ENCODE measurements at regions of chr9 and their contacts with region 1.

Region 1: DNA sequence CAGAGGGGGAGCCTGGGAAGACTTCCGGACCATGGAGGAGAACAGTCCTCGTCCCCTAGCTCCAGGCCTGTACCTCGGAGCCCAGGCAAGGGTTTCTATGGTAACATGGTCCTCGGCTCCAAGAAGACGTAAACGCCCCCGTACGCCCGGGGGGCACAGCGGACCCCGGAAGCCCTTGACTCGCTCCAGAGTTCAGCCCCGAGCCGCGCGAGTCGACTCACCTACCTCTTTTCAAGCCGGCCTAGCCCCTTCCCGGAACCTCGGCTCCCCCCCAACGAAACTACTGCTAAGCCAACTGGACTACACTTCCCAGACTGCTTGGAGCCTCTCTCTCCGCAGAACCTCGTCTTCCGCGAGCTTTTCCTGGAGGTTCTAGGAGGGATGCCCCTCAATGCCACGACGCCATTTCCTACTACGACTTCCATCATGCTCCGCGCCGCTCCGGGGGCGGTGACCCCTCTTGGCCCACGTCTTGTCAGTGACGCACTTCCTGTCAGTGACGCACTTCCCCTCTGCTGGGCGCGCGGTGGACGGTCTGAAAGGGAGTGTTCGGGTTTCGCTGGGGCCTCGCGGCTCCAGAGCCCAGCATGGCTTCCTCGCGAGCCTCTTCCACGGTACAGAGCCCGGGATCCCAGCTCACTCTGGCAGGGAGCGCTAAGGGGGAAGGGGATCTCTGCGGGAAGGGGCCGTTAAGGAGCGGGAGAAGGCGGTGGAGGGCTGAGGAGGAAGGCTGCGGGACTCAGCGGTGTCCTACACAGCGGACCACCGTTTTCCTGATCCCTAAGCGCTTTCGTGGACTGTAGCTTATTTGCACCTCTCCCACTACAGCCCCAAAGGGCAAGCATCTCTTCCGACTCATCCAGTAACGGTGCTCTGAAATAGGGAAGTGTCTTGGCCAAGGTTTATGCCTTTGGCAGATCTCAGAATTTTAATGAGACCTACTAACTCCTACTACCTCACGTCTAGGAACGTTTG is at the starts of genes CDC26 and PRPF4:
- DNase-seq: peak; percentile 94
- H3K4me3 ChIP-seq: peak within 1 kb of the TSS; percentile 97
- CTCF ChIP-seq: no peak

Region 2: GRCh38 chr9:113131689-113132151 is 143.7 kb before region 1 on chr9:
- CTCF ChIA-PET with region 1: no interaction called
- POLR2A ChIA-PET with region 1: no interaction called
- DNase-seq: no peak
- H3K4me3 ChIP-seq: no peak overlapping the region
- CTCF ChIP-seq: no peak

Region 3: GRCh38 chr9:113221003-113221799 is 54.2 kb before region 1 on chr9 and contains the starts of genes FKBP15 and SLC31A1:
- CTCF ChIA-PET with region 1: interaction called, 8 read pairs
- POLR2A ChIA-PET with region 1: interaction called, 13 read pairs
- DNase-seq: peak; percentile 87
- H3K4me3 ChIP-seq: peak within 1 kb of the TSS; percentile 96
- CTCF ChIP-seq: no peak

Region 4: GRCh38 chr9:113255438-113255837 is 20.0 kb before region 1 on chr9:
- CTCF ChIA-PET with region 1: interaction called, 20 read pairs
- POLR2A ChIA-PET with region 1: no interaction called
- DNase-seq: no peak
- H3K4me3 ChIP-seq: no peak overlapping the region
- CTCF ChIP-seq: no peak

Region 5: GRCh38 chr9:113261917-113262671 is 13.3 kb before region 1 on chr9:
- CTCF ChIA-PET with region 1: interaction called, 20 read pairs
- POLR2A ChIA-PET with region 1: no interaction called
- DNase-seq: no peak
- H3K4me3 ChIP-seq: no peak overlapping the region
- CTCF ChIP-seq: no peak

Region 6: DNA sequence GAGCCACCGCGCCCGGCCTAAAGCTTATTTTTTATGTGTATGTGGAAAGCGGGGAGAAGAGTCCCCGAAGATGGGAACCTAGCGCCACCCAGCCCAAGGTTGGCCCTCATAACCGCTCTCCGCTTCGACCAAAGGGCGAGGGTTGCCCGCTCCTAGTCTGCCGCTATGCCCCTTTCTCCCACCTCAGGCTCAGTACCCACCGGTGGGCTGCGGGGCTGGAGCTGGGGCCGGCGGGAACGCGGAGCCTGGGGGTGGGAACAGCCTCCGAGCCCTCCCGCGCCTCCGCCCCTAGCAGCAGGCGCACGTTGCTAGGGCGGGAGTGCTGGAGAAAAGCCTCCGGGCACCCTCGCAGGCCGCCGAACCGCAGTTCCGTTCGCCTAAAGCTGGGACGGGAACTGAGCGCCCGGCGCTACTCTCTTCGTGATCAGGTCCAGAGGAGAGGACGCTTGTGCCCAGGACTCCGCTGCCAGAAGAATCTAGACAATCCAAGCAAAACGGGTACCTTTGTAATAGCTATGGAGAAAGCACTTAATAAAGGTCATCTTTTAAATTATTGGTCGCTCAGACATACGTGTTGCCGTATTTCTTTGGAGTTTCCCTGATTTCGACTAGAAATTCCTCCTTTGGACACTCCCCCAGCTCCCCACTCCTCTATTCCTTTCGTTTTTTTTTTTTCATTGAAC is 64.7 kb after region 1 on chr9 and contains the start of gene WDR31:
- CTCF ChIA-PET with region 1: interaction called, 5 read pairs
- POLR2A ChIA-PET with region 1: interaction called, 14 read pairs
- DNase-seq: peak; percentile 29
- H3K4me3 ChIP-seq: peak within 1 kb of the TSS; percentile 93
- CTCF ChIP-seq: no peak

Region 7: DNA sequence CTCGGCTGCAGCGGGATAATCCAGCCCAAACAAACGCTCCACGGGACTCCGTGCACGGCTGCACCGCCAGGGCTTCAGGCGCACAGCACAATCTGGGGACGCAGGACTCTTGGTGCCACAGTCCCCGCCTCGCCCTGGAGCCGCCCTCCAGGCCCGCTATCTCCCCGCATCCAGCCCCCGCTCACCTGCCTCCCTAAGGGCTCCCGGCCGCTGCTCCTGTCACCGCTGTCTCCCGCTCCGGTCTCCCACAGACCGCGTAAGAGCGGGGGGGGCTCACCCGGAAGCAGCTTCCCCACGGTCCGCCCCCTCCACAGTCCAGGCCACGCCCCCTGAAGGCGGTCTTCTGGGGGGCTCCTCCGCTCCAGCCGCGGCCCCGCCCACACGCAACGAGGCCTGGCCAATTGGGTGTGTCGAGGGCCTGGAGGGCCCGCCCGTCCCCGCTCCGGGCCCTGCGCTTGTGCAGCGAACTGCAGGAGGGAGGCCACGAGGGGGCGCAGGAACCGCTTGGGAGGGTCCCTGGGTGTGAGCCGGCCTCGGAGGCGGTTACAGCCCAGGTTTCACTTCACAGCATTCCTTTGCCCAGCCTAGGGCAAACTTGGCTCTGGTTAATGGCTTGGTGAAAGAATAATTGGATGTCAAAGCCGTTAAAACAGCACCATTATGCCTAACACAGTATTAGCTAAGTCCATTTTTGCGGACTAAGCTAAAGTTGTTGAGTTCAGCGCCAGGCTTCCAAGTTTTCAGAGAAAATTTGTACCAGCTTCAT is 125.8 kb after region 1 on chr9 and contains the start of gene ALAD:
- CTCF ChIA-PET with region 1: interaction called, 65 read pairs
- POLR2A ChIA-PET with region 1: interaction called, 3 read pairs
- DNase-seq: peak; percentile 80
- H3K4me3 ChIP-seq: peak within 1 kb of the TSS; percentile 92
- CTCF ChIP-seq: peak; percentile 99

Region 8: DNA sequence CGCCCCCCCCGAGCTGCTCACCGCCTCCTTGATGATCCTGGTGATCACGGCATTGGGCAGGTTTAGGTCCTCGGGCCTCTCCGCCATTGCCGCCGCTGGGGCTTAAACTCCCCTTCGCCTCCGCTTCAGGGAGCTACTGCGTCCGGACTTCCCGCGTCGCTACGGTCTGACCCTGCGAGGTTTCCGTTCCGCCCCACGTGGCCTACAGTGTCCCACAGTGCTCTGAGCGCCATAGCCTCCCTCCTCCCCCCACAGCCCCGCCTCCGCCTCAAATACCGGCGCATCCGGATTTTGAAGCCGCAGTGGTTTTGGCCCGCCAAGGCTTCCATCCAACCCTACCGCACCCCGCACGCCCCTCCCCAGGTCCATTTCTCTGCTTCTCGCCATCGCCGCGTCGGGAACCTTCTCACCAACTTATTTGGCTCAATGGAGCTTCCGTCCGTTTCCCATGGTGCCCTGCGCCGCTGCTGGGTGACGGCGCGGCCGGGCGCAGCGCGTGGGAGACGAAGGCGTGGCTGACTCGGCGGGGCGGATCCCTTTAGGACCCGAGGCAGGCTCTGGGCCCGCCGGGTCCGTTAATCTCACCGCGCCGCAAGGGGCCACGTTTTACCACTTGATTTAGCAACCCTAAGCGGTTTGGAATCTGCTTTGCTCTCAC is 134.9 kb after region 1 on chr9 and contains the starts of genes C9orf43 and POLE3:
- CTCF ChIA-PET with region 1: interaction called, 62 read pairs
- POLR2A ChIA-PET with region 1: interaction called, 5 read pairs
- DNase-seq: peak; percentile 59
- H3K4me3 ChIP-seq: peak within 1 kb of the TSS; percentile 88
- CTCF ChIP-seq: no peak

Region 9: DNA sequence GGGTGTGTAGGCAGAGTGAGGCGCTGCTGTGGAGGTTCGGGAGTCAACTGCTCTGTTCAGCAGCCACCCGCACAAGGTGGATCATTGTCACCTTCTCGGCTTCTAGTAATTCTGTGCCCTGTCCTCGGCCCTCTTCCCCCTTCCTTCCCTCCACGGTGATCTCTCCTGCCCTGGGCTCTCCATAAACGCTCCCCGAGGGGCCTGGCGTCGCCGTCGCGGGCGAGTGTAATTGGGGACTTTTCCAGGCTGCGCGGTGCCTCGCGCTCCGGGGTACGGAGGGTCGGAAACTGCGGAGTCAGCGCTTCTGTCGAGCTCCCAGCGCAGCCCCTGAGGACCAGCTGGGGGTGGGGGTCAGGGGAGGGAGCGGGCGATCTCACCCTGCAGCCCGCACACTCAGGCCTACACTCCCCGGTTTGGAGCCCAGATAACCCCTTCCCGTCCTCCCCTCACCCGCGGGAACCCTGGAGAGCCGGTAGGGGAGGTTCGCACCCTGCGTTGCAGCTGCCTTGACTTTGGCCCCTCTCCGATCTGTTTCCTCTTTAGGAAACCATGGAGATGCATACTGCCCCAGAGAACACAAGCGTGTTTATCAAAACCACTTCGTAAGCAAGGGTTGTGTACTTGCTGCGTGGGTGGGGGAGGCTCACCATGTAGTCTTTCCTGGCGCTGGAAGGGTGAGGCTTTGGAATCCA is 412.4 kb after region 1 on chr9:
- CTCF ChIA-PET with region 1: no interaction called
- POLR2A ChIA-PET with region 1: no interaction called
- DNase-seq: no peak
- H3K4me3 ChIP-seq: no peak overlapping the region
- CTCF ChIP-seq: no peak